ENCODE measurements at regions of chr1 and their contacts with region 1.

Region 1: DNA sequence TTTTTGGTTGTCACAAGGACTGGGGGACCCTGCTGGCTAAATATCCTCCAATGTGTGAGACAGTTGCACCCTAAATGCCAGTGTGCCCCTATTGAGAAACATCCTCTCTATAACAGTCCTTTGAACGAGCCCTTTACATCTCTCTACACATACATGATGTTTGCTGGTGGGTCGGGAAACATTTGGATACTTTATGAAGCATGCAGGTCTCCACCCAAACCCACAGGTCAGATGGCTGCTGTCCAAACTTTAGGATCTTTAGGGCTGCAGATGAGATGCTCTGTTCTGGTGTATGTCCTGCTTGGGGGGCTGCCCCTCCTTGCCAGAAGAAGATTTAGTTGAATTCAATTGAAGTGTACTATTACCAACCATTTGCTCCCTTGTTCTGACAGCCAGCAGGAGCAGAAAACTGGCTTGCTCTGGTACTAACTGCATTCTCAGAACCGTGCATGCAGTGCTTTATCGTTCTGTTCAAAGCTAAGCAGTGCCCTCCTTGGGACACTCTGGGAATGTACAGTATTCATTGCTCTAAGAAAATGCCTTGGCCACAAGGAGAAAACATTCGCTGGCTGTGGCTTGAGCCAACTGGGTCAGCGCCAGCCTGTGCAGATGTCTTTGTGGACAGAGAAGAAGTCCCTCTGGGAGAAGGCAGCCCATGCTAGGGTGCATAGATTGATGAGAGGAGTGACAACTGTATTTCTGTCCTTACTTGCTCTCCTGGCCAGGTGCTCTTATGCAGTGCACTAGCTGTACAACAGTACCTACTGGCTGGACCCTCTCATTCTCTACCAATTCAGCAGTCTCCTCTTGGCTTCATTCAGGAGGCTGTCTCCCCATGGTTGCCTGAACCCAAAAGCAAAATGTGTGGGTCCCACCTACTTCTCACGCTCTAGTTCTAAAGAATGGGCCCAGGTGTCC is 61.4 kb upstream of the DIRAS3 start:
- DNase-seq: peak; percentile 70 to 83
- ATAC-seq: peak; percentile 89
- H3K4me3 ChIP-seq: no peak overlapping the region
- H3K27ac ChIP-seq: no peak overlapping the region
- H3K4me1 ChIP-seq: no peaks in the 10 kb centered on the region
- H3K27me3 ChIP-seq: no peaks in the 10 kb centered on the region

Region 2: DNA sequence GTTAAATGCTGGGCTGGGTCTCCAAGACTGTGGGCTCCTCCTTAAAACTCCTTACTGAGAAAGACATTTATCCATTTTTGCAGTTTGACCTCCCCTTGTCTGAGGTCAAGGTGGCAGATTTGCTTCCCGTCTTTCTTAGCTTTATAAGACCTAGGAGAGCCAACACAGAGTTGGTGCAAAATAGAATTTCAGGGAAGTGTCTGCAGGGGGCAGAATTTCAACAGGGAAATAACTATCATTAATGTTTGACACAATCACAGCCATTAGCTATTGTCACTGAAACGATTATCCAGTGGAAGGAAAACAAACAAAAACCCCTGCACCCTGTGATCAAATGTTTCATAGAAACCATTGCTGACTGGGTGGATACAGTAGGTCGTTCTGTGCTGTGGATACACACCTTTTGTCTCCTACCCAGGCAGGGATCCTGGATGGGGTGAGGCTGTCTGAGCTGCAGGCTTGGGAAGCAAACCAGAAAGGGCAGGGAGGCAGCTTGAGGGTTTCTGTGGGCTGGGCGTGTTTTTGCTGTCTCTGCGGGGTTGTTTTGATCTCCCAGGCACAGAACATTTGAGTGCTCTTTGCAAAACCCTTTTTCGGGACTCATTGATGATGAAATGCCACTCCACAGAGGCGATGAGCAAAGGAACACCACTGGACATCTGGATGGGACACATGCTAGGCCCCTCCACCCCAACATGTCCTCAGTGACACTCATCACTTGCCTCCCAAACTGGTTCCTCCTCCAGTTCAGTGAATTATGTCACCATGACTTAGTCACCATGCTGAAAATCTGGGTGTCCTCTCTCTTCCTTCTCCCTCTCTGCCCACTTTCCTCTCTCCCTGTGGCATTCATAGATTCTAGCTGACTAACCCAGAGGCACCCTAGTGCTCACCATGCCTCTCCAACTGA is 587.4 kb before region 1 on chr1:
- intact Hi-C with region 1: loop called in 1 of 2 experiments (anchors 5 kb)
- DNase-seq: no peak
- ATAC-seq: no peak
- H3K4me3 ChIP-seq: no peak overlapping the region
- H3K27ac ChIP-seq: no peak overlapping the region
- H3K4me1 ChIP-seq: no peaks in the 10 kb centered on the region
- H3K27me3 ChIP-seq: no peaks in the 10 kb centered on the region

Region 3: DNA sequence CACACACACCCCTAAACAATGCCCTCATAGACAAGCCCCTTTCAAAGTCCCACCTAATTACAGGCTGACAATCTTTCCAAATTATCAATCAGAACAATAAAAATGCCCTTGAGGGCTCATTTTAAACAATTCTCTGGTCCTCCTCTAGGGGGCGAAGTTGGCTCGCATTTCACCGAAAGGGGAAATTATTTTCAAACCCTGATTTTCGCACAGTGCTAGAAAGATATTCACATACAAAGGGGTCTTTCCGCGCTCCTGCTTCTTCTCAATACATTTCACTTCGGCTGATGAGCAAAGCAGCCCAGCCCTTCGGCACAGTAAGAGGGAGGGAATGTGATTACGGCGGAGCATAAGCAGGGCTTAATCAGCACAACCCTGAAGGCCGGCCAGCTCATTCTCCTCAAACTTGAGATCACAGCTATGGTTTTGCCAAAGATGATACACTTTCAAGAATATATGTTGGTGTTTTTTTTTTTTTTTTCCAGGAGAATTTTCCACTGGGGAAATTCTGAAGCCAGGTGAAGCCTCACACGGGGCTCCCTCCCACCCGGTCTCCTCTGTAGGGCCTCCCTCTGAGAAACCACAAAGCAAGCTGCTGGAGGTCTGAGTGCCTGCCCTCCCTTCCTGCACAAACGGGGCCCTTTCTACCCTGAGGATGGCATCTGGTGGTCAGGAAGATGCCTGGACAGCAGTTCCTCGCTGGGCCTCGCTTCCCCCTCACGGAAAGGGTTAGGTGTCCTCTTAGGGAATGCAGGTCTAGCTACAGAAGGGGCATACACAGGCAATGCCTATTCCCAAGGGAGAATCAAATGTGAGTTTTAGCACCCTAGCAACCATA is 345.4 kb before region 1 on chr1:
- intact Hi-C with region 1: loop called (anchors 2 to 5 kb)
- DNase-seq: peak; percentile 63 to 83
- ATAC-seq: peak; percentile 76
- H3K4me3 ChIP-seq: no peak overlapping the region
- H3K27ac ChIP-seq: peak overlapping the region in 1 of 2 donors; percentile 22
- H3K4me1 ChIP-seq: peaks cover 0 to 5% of the 10 kb centered on the region in 2 donors
- H3K27me3 ChIP-seq: no peaks in the 10 kb centered on the region

Region 4: DNA sequence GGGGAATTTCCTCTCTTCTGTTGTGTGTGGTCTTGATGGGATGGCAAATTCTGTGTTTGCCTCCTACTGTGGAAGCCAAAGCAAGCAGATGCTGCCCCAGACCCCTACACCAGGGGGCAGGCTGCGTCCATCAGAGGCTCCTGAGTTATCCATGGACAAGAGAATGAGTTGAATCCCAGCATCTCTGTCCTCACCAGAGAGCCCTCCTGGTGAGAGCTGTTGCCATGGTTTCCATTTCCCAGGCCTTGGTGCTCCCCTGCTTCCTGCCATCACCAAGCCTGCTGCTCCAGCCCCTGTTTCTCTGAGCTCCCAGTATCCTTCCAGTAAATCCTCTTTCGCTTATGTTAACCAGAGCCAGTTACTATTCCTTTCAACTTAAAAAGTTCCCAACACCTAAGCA is 258.1 kb before region 1 on chr1:
- intact Hi-C with region 1: loop called (anchors 2 to 5 kb)
- DNase-seq: peak; percentile 54 to 79
- ATAC-seq: no peak
- H3K4me3 ChIP-seq: no peak overlapping the region
- H3K27ac ChIP-seq: no peak overlapping the region
- H3K4me1 ChIP-seq: peaks cover 2 to 3% of the 10 kb centered on the region in 2 donors
- H3K27me3 ChIP-seq: no peaks in the 10 kb centered on the region

Region 5: GRCh38 chr1:68346188-68346808 is 234.5 kb after region 1 on chr1:
- intact Hi-C with region 1: loop called in 1 of 2 experiments (anchors 2 kb)
- DNase-seq: no peak
- ATAC-seq: no peak
- H3K4me3 ChIP-seq: no peak overlapping the region
- H3K27ac ChIP-seq: no peak overlapping the region
- H3K4me1 ChIP-seq: no peaks in the 10 kb centered on the region
- H3K27me3 ChIP-seq: no peaks in the 10 kb centered on the region

Measured in aorta (tissue), 5 donors.